Psoas muscle (tissue), 8 donors: ENCODE measurements at regions of chr2 and their contacts with region 1.

Region 1: DNA sequence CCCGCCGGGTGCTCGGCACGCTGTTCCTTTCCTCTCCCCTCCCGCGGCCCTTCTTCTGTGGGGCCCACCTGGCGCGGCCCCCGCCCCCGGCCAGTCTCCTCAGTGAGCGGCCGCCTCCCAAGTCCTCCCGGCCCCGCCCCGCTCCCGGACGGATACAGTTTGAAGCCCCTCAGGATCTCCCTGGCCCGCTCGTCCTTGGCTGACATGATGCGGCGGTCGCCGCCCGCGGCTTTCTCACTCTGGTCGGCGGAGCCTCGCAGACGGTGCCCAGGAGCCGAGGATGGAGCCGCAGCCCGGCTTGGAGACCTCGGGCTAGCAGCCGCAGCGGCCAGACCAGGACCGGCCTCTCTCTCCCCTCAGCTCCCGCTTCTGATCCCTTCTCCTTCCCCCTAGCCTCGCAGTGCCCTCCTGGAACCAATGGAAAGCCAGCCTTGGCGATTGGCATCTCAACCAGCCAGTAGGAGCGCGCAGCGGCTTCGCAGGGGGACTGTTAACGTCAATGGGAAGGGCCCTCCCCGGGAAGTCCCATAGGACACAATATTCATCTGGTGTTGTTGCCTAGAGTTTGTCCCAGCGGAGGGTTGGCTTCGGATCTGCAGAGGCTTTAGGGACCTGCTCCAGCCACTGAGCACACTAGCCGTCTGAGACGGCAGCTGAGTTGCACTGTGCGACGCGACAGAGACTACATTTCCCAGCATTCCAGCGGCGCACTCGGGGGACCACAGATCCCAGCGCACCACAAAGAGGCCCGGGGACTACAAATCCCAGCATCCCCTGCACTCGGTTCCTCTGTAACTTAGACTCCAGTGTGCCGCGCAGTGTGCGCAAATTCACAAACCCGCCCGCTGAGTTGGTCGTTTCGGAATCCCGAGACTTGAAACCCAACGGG is at the start of gene PDE6D:
- DNase-seq: peak; percentile 98 to 99
- ATAC-seq: peak; percentile 96 to 98 (median 97)
- H3K4me3 ChIP-seq: peak within 1 kb of the TSS; percentile 92
- H3K27ac ChIP-seq: peak within 1 kb of the TSS; percentile 84
- H3K4me1 ChIP-seq: peaks cover 26% of the 10 kb centered on the region
- H3K27me3 ChIP-seq: no peaks in the 10 kb centered on the region
- CTCF ChIP-seq: no peak
- total RNA-seq, gene PDE6D: 8.7 to 13.8 (median 10.7) TPM

Region 2: DNA sequence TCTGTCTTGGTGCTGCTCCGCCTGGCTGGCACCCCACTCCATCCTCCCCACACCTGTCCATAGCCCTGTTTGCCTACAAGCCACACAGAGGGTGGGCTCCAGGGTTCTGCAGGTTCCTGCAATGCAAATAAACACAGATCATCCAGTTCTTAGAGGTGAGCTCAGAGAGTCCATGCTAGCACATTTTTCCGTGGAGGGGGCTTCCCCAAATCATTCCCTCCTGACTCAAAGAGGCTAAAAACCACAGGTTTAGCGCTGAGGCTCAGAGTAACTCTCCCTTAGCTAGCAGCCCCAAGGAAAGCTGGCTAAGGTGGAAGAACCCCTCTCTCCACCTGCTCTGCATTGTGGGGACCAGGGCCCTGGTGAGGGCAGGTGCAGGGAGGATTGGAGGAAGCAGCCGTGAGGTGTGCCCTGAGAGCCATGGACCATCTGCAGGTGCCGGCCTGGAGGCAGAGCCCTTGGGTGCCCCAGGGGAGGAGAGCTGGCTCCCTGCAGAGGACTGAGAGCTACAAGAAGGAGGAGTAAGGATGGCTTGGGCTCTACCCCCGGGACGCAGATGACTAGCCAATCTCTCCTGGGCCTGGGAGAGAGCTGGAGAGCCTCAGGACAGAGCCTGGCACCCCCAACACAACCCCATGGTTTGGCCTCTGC is 212.2 kb before region 1 on chr2:
- intact Hi-C with region 1: no loop called
- DNase-seq: no peak
- ATAC-seq: peak in 1 of 4 donors; percentile 33
- H3K4me3 ChIP-seq: no peak overlapping the region
- H3K27ac ChIP-seq: no peak overlapping the region
- H3K4me1 ChIP-seq: no peaks in the 10 kb centered on the region
- H3K27me3 ChIP-seq: no peaks in the 10 kb centered on the region
- CTCF ChIP-seq: no peak

Region 3: DNA sequence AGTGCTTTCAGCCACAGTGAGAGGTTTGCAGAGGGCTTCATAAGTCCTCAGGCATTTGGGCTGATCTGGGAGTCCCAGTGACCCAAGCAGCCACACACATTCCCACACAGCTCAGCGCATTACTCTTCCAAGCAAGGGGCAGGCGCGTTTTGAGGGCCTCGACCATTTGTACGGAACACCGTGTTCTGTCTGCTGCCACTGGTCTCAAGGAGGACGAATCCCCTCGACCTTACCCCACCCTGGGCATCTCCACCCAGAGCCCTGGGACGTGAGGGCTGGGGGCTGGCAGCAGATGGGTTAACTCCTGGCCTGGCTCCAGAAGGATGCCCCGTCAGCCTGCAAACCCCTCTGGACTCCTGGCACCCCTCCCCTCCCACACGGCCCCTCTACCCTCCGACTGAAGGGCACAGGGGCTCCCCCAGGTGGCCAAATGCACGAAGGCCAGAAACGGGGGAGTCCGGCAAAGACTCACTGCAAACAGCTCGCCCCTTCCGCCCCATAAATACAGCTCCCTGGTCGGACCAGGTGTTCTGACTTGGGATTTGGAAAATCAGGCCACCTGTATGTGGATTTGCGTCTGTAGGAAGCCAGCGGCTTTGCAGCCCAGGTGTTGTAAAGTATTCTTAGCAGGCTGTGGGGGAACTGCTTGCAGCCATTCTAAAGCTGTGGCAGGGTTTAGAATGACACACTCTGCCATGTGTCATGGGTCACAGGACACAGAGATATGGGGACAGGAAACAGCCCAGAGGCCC is 106.4 kb before region 1 on chr2:
- intact Hi-C with region 1: loop called in 1 of 2 experiments (anchors 5 kb)
- DNase-seq: peak; percentile 77 to 87
- ATAC-seq: peak; percentile 60 to 81 (median 68)
- H3K4me3 ChIP-seq: no peak overlapping the region
- H3K27ac ChIP-seq: peak overlapping the region; percentile 80
- H3K4me1 ChIP-seq: peaks cover 15% of the 10 kb centered on the region
- H3K27me3 ChIP-seq: no peaks in the 10 kb centered on the region
- CTCF ChIP-seq: peak; percentile 73

Region 4: GRCh38 chr2:231706731-231707624 is 74.2 kb before region 1 on chr2:
- intact Hi-C with region 1: loop called in 1 of 2 experiments (anchors 5 kb)
- DNase-seq: peak; percentile 98 to 99
- ATAC-seq: peak; percentile 64 to 78 (median 67)
- H3K4me3 ChIP-seq: peak overlapping the region; percentile 89
- H3K27ac ChIP-seq: peak overlapping the region; percentile 97
- H3K4me1 ChIP-seq: peaks cover 17% of the 10 kb centered on the region
- H3K27me3 ChIP-seq: no peaks in the 10 kb centered on the region
- CTCF ChIP-seq: peak; percentile 80

Region 5: GRCh38 chr2:231877533-231878456 is 96.6 kb after region 1 on chr2:
- intact Hi-C with region 1: no loop called
- DNase-seq: no peak
- ATAC-seq: no peak
- H3K4me3 ChIP-seq: no peak overlapping the region
- H3K27ac ChIP-seq: no peak overlapping the region
- H3K4me1 ChIP-seq: no peaks in the 10 kb centered on the region
- H3K27me3 ChIP-seq: peaks cover 0 to 20% (median 0%) of the 10 kb centered on the region in 3 donors
- CTCF ChIP-seq: no peak